K562 (cell line): ENCODE measurements at regions of chr18 and their contacts with region 1.

Region 1: GRCh38 chr18:12397254-12397653 is 10.5 kb upstream of the PRELID3A start:
- DNase-seq: no peak
- ATAC-seq: peak; percentile 15; the same call in 2 of the 3 replicates
- H3K4me3 ChIP-seq: no peak overlapping the region
- H3K27ac ChIP-seq: no peak overlapping the region
- H3K4me1 ChIP-seq: peaks cover 6 to 11% of the 10 kb centered on the region in 2 experiments; a peak in 3 of 5 replicates
- H3K27me3 ChIP-seq: no peaks in the 10 kb centered on the region
- CTCF ChIP-seq: 0 out of 6 replicates have a peak, but pooled peaks of 1 of the 3 experiments have one; percentile 2
- EP300 ChIP-seq: no peak
- POLR2A ChIP-seq: no peak
- RAD21 ChIP-seq: no peak

Region 2: GRCh38 chr18:12531749-12532148 is 134.5 kb after region 1 on chr18:
- CTCF ChIA-PET with region 1: no interaction called
- POLR2A ChIA-PET with region 1: no interaction called
- in situ Hi-C with region 1: no loop called
- intact Hi-C with region 1: loop called (anchors 5 kb)
- DNase-seq: no peak
- ATAC-seq: peak; percentile 61; the same call in 2 of the 3 replicates
- H3K4me3 ChIP-seq: no peak overlapping the region
- H3K27ac ChIP-seq: no peak overlapping the region
- H3K4me1 ChIP-seq: no peaks in the 10 kb centered on the region
- H3K27me3 ChIP-seq: no peaks in the 10 kb centered on the region
- CTCF ChIP-seq: peak in 2 of 3 experiments; percentile 12 to 18; a peak in 1 of 6 replicates
- EP300 ChIP-seq: no peak
- POLR2A ChIP-seq: no peak
- RAD21 ChIP-seq: peak in 1 of 2 experiments; percentile 19; a peak in 2 of 4 replicates

Region 3: GRCh38 chr18:12768625-12769024 is 371.4 kb after region 1 on chr18:
- CTCF ChIA-PET with region 1: no interaction called
- POLR2A ChIA-PET with region 1: no interaction called
- in situ Hi-C with region 1: no loop called
- intact Hi-C with region 1: no loop called
- DNase-seq: no peak
- ATAC-seq: no peak
- H3K4me3 ChIP-seq: no peak overlapping the region
- H3K27ac ChIP-seq: no peak overlapping the region
- H3K4me1 ChIP-seq: peaks cover 9 to 13% of the 10 kb centered on the region in 2 experiments
- H3K27me3 ChIP-seq: no peaks in the 10 kb centered on the region
- CTCF ChIP-seq: no peak
- EP300 ChIP-seq: no peak
- POLR2A ChIP-seq: no peak
- RAD21 ChIP-seq: no peak

Region 4: DNA sequence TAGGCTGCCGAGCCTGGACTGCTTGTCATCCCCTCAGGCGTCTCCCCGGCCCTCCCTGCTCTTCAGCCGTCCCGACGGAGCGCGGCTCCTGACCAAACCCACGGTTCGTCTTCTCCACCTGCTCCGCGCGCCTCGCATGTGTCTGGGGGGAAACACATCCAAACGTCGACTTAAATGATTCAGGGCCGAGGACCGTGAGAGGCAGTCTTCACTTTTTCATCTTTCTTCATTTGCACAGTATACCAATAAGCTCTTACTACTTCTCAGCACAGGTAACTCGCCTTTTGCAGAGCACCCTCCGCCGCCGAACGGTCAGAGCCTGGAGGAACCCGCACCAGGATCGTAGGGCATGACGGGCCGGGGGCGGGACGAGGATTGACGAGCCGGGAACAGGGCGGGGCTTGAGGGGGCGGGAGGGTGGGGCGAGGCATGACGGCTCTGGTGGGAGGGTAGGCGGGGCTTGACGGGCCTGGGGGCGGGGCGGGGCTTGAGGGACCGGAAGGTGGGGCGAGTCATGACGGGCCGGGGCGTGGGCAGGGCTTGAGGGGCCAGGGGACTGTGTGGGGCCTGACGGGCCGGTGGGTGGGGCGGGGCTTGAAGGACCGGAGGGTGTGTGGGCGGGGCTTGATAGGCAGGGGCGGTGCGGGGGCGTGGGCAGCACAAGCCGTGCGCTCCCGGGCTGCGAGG is 550.2 kb after region 1 on chr18 and contains the start of gene SEH1L:
- CTCF ChIA-PET with region 1: no interaction called
- POLR2A ChIA-PET with region 1: no interaction called
- in situ Hi-C with region 1: loop called (anchors 5 kb)
- intact Hi-C with region 1: no loop called
- DNase-seq: peak; percentile 97 to 99 (median 99)
- ATAC-seq: peak; percentile 91
- H3K4me3 ChIP-seq: peak within 1 kb of the TSS; percentile 85
- H3K27ac ChIP-seq: peak within 1 kb of the TSS; percentile 98
- H3K4me1 ChIP-seq: peaks cover 19 to 31% of the 10 kb centered on the region in 2 experiments; a peak in 4 of 5 replicates
- H3K27me3 ChIP-seq: no peaks in the 10 kb centered on the region
- CTCF ChIP-seq: no peak
- EP300 ChIP-seq: no peak
- POLR2A ChIP-seq: peak; percentile 88
- RAD21 ChIP-seq: no peak
- polyA plus RNA-seq, gene SEH1L: 83.6 to 108 TPM